Astrocyte of the cerebellum (primary cell): ENCODE measurements at regions of chr12 and their contacts with region 1.

Region 1: DNA sequence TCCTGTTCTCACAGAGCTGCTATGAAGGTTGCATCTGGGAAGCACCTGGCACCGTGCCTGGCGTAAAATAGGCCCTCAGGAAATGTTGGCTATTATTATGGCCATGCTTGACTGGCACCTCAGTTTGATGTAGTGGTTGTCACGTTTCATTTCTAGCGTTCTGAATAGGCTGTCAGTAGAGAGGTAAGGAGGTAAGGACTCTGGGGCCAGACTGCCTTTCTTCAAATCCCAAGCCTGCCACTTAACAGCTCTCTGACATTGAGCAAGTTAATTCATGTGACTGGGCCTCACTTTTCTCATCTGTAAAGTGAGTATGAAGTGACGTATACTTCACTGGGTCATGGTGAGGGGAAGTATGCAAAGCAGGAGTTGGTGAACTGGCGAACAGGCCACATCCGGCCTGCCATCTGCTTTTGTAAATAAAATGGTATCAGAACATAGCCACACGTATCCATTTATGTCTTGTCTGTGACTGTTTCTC is 196.2 kb downstream of the CACNA1C start:
- DNase-seq: no peak
- H3K4me3 ChIP-seq: no peak overlapping the region
- CTCF ChIP-seq: no peak

Region 2: GRCh38 chr12:2179953-2180736 is 68.8 kb before region 1 on chr12:
- in situ Hi-C with region 1: loop called (anchors 5 kb)
- DNase-seq: peak; percentile 87
- H3K4me3 ChIP-seq: no peak overlapping the region
- CTCF ChIP-seq: no peak

Region 3: DNA sequence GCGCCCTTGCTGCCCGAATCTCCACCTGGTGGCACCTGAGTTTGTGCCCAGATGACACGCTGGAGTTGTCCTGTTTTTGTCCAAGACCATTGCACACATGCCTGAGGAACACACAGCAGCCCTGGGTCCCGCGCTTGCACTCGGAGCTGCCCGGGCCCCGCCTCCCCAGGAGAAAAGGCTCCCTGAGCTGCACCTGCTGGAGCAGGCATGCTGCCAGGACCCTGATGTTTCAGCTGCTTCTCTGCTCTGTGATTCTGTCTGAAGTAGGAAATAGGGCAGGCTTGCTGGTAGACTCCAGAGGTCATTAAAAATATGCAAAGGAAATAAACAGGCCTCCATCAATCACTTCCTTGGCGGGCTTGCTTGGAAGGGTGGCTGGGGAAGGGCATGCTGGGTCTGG is 75.4 kb after region 1 on chr12:
- in situ Hi-C with region 1: no loop called
- DNase-seq: no peak
- H3K4me3 ChIP-seq: no peak overlapping the region
- CTCF ChIP-seq: no peak

Region 4: DNA sequence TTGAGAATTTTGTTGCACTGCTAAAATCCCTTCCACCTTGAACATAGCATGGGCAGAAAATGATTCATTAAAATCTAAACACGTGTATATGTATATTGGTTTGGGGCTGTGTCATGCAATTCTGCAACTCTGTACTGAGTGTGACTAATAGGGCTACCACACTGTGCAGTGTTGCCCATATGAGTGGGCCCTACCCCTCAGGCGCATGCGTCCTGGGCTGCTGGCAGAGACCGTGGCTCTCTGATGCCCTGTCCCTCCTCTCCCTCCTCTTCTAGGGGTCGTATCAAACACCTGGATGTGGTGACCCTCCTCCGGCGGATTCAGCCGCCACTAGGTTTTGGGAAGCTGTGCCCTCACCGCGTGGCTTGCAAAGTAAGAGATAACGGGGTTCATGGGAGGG is 417.5 kb after region 1 on chr12:
- in situ Hi-C with region 1: no loop called
- DNase-seq: no peak
- H3K4me3 ChIP-seq: no peak overlapping the region
- CTCF ChIP-seq: no peak